ENCODE measurements at regions of chr14 and their contacts with region 1.

Region 1: DNA sequence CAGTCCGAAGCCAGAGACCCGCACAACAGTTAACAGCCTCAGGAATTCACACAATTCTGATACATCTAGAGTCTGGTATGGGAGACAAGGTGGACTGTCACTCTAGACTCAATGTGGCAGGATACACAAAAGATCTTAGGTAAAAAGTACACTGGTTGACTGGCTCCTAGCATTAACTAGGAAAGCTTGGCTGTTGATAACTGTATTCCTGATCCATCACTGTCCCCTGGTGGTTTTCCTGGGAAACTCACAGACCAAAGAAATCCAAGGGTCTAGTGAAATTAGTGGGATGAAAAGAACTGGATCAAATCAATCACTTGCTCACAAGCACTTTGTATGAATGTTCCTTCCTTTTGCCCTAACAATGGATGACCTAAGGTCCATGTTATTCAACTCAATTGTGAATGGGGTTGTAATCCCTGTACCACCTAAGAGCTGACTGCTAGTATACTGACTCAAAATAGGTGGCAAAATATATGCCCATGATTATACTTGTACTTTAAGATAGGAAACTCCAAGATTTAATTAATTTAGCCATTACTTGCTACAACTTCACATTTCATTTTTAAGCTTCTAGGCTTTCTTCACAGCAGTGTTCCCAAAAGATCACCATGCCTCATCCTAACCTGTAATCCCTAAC is 14.0 kb downstream of the NPC2 start:
- DNase-seq: no peak
- ATAC-seq: peak; percentile 80
- H3K4me3 ChIP-seq: no peak overlapping the region
- H3K27ac ChIP-seq: no peak overlapping the region
- H3K4me1 ChIP-seq: no peaks in the 10 kb centered on the region
- H3K27me3 ChIP-seq: no peaks in the 10 kb centered on the region
- CTCF ChIP-seq: peak; percentile 81

Region 2: GRCh38 chr14:73223049-73223448 is 1256.1 kb before region 1 on chr14:
- CTCF ChIA-PET with region 1: no interaction called
- POLR2A ChIA-PET with region 1: no interaction called
- in situ Hi-C with region 1: no loop called
- intact Hi-C with region 1: no loop called
- DNase-seq: no peak
- ATAC-seq: no peak
- H3K4me3 ChIP-seq: no peak overlapping the region
- H3K27ac ChIP-seq: peak overlapping the region; percentile 29; the same call in 1 of the 2 replicates
- H3K4me1 ChIP-seq: peaks cover 11% of the 10 kb centered on the region
- H3K27me3 ChIP-seq: no peaks in the 10 kb centered on the region
- CTCF ChIP-seq: no peak

Region 3: GRCh38 chr14:74362361-74362915 is 116.7 kb before region 1 on chr14:
- CTCF ChIA-PET with region 1: no interaction called
- POLR2A ChIA-PET with region 1: no interaction called
- in situ Hi-C with region 1: no loop called
- intact Hi-C with region 1: loop called (anchors 1 kb)
- DNase-seq: peak; percentile 67
- ATAC-seq: peak; percentile 86
- H3K4me3 ChIP-seq: no peak overlapping the region
- H3K27ac ChIP-seq: peak overlapping the region; percentile 39; the same call in 1 of the 2 replicates
- H3K4me1 ChIP-seq: no peaks in the 10 kb centered on the region
- H3K27me3 ChIP-seq: no peaks in the 10 kb centered on the region
- CTCF ChIP-seq: peak; percentile 90

Measured in Panc1 (cell line).